SK-N-SH (cell line): ENCODE measurements at regions of chr14 and their contacts with region 1.

Region 1: GRCh38 chr14:89973234-89973823 is 17.6 kb downstream of the TDP1 start:
- DNase-seq: peak; percentile 69
- H3K4me3 ChIP-seq: no peak overlapping the region; a peak in 1 of 4 replicates
- H3K27ac ChIP-seq: no peak overlapping the region
- H3K4me1 ChIP-seq: peaks cover 0 to 2% of the 10 kb centered on the region in 2 experiments; a peak in 1 of 4 replicates
- H3K27me3 ChIP-seq: no peaks in the 10 kb centered on the region
- CTCF ChIP-seq: peak; percentile 93
- EP300 ChIP-seq: no peak
- RAD21 ChIP-seq: peak; percentile 87

Region 2: GRCh38 chr14:89760086-89760485 is 213.2 kb before region 1 on chr14:
- CTCF ChIA-PET with region 1: no interaction called
- POLR2A ChIA-PET with region 1: no interaction called
- DNase-seq: no peak
- H3K4me3 ChIP-seq: no peak overlapping the region
- H3K27ac ChIP-seq: no peak overlapping the region
- H3K4me1 ChIP-seq: peaks cover 0 to 3% of the 10 kb centered on the region in 2 experiments; a peak in 2 of 4 replicates
- H3K27me3 ChIP-seq: no peaks in the 10 kb centered on the region
- CTCF ChIP-seq: no peak
- EP300 ChIP-seq: no peak
- RAD21 ChIP-seq: no peak

Region 3: DNA sequence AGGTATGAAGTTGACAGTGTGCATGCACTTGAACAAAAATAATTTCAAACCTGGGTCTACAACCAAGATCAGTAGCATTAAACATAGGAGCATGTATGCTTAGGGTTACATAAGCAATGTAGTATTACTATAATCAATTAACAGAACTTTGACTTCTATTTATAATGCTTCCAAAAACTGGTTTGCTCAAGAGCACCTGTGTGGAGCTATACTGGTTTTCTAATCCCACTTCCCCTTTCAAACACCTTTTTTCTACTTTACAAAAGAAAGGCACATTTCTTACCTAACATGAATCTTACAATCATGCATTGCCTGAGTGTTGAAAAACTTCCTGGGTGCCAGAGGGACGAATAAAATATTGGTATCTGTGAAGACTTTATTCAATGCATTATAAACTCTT is 91.5 kb before region 1 on chr14:
- CTCF ChIA-PET with region 1: no interaction called
- POLR2A ChIA-PET with region 1: no interaction called
- DNase-seq: no peak
- H3K4me3 ChIP-seq: no peak overlapping the region
- H3K27ac ChIP-seq: no peak overlapping the region
- H3K4me1 ChIP-seq: peaks cover 0 to 2% of the 10 kb centered on the region in 2 experiments; a peak in 2 of 4 replicates
- H3K27me3 ChIP-seq: no peaks in the 10 kb centered on the region
- CTCF ChIP-seq: no peak
- EP300 ChIP-seq: no peak
- RAD21 ChIP-seq: no peak

Region 4: GRCh38 chr14:89915114-89915878 is 58.0 kb before region 1 on chr14:
- CTCF ChIA-PET with region 1: no interaction called
- POLR2A ChIA-PET with region 1: no interaction called
- DNase-seq: peak; percentile 50
- H3K4me3 ChIP-seq: peak overlapping the region in 1 of 2 experiments; percentile 12; a peak in 1 of 4 replicates
- H3K27ac ChIP-seq: peak overlapping the region in 1 of 2 experiments; percentile 84; a peak in 1 of 4 replicates
- H3K4me1 ChIP-seq: peaks cover 20 to 24% of the 10 kb centered on the region in 2 experiments
- H3K27me3 ChIP-seq: no peaks in the 10 kb centered on the region
- CTCF ChIP-seq: peak; percentile 97
- EP300 ChIP-seq: no peak
- RAD21 ChIP-seq: peak; percentile 93

Region 5: GRCh38 chr14:89941830-89942377 is 31.4 kb before region 1 on chr14:
- CTCF ChIA-PET with region 1: interaction called, 34 read pairs
- POLR2A ChIA-PET with region 1: no interaction called
- DNase-seq: no peak
- H3K4me3 ChIP-seq: no peak overlapping the region
- H3K27ac ChIP-seq: no peak overlapping the region
- H3K4me1 ChIP-seq: no peaks in the 10 kb centered on the region
- H3K27me3 ChIP-seq: no peaks in the 10 kb centered on the region
- CTCF ChIP-seq: no peak
- EP300 ChIP-seq: no peak
- RAD21 ChIP-seq: no peak

Region 6: DNA sequence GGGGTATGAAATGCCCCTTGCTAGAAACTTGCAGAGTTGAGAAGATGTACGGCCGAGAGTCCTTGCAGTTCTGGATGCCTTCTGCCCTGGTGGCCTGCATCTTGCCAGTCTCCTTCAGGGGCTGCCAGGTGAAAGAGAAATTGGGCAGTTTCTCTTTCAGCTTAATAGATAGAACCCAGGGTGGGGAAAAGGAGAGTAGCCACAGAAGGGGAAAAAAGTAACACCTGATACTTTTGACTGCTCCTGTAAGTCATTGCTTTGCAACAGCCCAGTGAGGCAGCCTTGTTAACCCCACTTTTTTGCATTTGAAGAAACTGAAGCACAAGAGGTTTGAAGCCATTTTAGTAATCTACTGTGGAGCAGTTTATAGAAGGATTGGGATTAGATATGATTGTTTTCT is 10.0 kb after region 1 on chr14:
- CTCF ChIA-PET with region 1: interaction called, 91 read pairs
- POLR2A ChIA-PET with region 1: no interaction called
- DNase-seq: no peak
- H3K4me3 ChIP-seq: no peak overlapping the region
- H3K27ac ChIP-seq: no peak overlapping the region
- H3K4me1 ChIP-seq: peaks cover 0 to under 1% of the 10 kb centered on the region in 2 experiments; a peak in 1 of 4 replicates
- H3K27me3 ChIP-seq: no peaks in the 10 kb centered on the region
- CTCF ChIP-seq: no peak
- EP300 ChIP-seq: no peak
- RAD21 ChIP-seq: no peak

Region 7: GRCh38 chr14:90003908-90004307 is 30.6 kb after region 1 on chr14:
- CTCF ChIA-PET with region 1: interaction called, 10 read pairs
- POLR2A ChIA-PET with region 1: no interaction called
- DNase-seq: no peak
- H3K4me3 ChIP-seq: no peak overlapping the region
- H3K27ac ChIP-seq: no peak overlapping the region
- H3K4me1 ChIP-seq: peaks cover 0 to 2% of the 10 kb centered on the region in 2 experiments; a peak in 1 of 4 replicates
- H3K27me3 ChIP-seq: no peaks in the 10 kb centered on the region
- CTCF ChIP-seq: no peak
- EP300 ChIP-seq: no peak
- RAD21 ChIP-seq: no peak

Region 8: GRCh38 chr14:90072350-90072749 is 99.0 kb after region 1 on chr14:
- CTCF ChIA-PET with region 1: interaction called, 12 read pairs
- POLR2A ChIA-PET with region 1: no interaction called
- DNase-seq: no peak
- H3K4me3 ChIP-seq: no peak overlapping the region
- H3K27ac ChIP-seq: no peak overlapping the region
- H3K4me1 ChIP-seq: no peaks in the 10 kb centered on the region
- H3K27me3 ChIP-seq: peaks cover 20% of the 10 kb centered on the region; the same call in 1 of the 2 replicates
- CTCF ChIP-seq: no peak
- EP300 ChIP-seq: no peak
- RAD21 ChIP-seq: no peak

Region 9: GRCh38 chr14:90256354-90257131 is 283.2 kb after region 1 on chr14 and contains the start of gene PSMC1:
- CTCF ChIA-PET with region 1: interaction called, 15 read pairs
- POLR2A ChIA-PET with region 1: no interaction called
- DNase-seq: peak; percentile 90
- H3K4me3 ChIP-seq: peak within 1 kb of the TSS; percentile 83 to 84
- H3K27ac ChIP-seq: peak within 1 kb of the TSS; percentile 81 to 82
- H3K4me1 ChIP-seq: peaks cover 0 to 2% of the 10 kb centered on the region in 2 experiments; a peak in 2 of 4 replicates
- H3K27me3 ChIP-seq: no peaks in the 10 kb centered on the region
- CTCF ChIP-seq: no peak
- EP300 ChIP-seq: 0 out of 4 replicates have a peak, but pooled peaks of 1 of the 2 experiments have one; percentile 5
- RAD21 ChIP-seq: no peak
- polyA plus RNA-seq, gene PSMC1: 102 and 129 TPM in 2 replicates